CD4-positive, alpha-beta T cell (primary cell): ENCODE measurements at regions of chr19 and their contacts with region 1.

Region 1: GRCh38 chr19:36850559-36851442 is at the start of gene ZNF345:
- DNase-seq: peak; percentile 69 to 94 (median 79)
- ATAC-seq: peak; percentile 81
- H3K4me3 ChIP-seq: peak within 1 kb of the TSS; percentile 83
- H3K4me3 Mint-ChIP-seq: no peak within 1 kb of the TSS
- H3K27ac ChIP-seq: peak within 1 kb of the TSS; percentile 71 to 86
- H3K27ac Mint-ChIP-seq: no peak within 1 kb of the TSS
- H3K4me1 ChIP-seq: peaks cover 29% of the 10 kb centered on the region
- H3K4me1 Mint-ChIP-seq: peaks cover 15% of the 10 kb centered on the region
- H3K27me3 ChIP-seq: no peaks in the 10 kb centered on the region
- H3K27me3 Mint-ChIP-seq: no peaks in the 10 kb centered on the region
- CTCF ChIP-seq: no peak
- total RNA-seq, gene ZNF345: 5.9 to 7.1 TPM

Region 2: DNA sequence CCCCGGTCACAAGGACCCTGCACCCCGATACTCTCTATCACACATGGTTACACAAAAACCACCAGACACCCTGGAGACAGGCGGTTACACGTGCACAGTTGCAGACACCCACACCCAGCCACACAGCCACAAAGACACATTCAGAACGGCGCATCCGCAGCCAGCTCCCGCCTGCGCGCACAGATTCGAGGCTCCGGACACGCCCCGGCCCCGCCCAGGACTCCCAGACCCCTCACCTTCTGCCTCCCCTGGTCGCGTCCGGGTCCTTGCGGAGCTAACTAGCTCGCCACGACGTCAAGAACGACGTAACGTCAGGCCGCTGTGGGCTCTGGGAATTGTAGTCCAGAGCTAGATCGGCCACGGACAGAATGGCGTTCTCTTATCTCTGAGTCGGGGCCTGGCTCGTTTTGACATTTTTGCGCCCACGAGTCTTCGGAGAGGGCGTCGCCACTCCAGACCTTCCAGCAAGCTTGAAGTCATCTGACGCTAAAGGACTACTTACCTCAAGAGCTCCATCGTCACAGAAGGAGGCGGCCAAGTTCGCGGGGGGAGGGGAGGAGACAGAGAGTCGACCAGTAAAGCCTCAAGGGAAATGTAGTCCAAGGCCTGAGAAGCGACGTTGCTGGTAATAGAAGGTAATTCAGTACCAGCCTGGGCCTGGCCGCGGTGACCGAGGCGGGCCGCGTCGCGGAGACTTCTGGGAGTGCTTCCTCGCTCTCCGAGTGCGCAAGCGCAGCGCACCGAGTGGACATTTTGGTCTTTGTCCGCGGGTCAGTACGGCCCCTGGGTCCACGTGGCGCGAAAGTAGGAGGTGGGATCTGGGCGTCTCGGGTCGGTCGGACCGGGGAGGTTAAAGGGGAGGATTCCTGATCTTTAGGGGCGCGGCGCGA is 636.2 kb before region 1 on chr19 and contains the starts of genes ZNF146 and ZNF565:
- CTCF ChIA-PET with region 1: no interaction called
- POLR2A ChIA-PET with region 1: interaction called, 19 read pairs
- intact Hi-C with region 1: loop called in 1 of 2 experiments (anchors 1 kb)
- DNase-seq: peak; percentile 90 to 99 (median 94)
- ATAC-seq: peak; percentile 84
- H3K4me3 ChIP-seq: peak within 1 kb of the TSS; percentile 86
- H3K4me3 Mint-ChIP-seq: no peak within 1 kb of the TSS
- H3K27ac ChIP-seq: peak within 1 kb of the TSS; percentile 93 to 99
- H3K27ac Mint-ChIP-seq: no peak within 1 kb of the TSS
- H3K4me1 ChIP-seq: peaks cover 28% of the 10 kb centered on the region
- H3K4me1 Mint-ChIP-seq: peaks cover 17% of the 10 kb centered on the region
- H3K27me3 ChIP-seq: no peaks in the 10 kb centered on the region
- H3K27me3 Mint-ChIP-seq: no peaks in the 10 kb centered on the region
- CTCF ChIP-seq: no peak
- total RNA-seq, gene ZNF146: 13.6 to 13.7 TPM
- total RNA-seq, gene ZNF565: 7.6 to 8.5 TPM

Region 3: DNA sequence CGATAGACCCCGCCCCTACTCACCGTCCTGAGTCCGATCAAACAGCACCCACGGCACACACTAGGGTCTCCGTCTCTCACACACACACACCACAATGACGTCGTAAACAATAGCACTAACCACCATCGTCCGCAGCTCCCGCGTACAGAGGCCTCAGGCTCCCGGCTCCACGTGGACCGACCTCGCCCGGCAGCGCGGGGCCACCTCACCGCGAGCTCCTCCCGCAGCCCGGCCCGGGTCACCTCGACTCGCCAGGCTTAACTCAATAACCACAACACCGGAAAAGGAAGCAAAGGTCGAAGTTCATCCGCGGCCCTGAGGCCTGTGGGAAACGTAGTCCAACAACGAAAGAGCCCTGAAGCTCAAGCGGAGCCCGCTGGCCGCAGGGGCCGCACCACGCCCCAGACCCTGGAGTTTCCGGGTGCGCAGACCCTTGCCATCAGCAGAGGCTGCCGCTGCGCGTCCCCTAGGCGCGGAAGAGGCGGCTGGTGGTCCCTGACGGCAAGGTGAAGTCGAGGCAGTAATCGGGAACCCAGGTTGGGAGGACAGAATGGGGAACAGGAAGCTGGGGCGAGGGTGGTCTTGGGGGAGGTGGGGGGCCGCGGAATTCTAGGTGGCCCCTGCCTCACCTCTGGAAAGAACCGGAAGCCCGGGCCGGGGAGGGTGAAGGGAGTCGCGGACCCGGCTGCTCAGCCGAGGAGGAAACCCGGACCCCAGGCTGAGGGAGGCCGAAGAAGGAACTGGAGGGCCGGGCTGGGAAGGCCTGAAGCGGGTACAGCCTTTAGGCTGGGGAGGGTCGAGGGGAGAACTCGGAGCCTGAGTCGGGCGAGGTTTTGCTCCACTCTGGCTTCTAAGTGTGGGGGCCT is 277.5 kb before region 1 on chr19 and contains the start of gene ZNF529:
- CTCF ChIA-PET with region 1: no interaction called
- POLR2A ChIA-PET with region 1: interaction called, 12 read pairs
- intact Hi-C with region 1: loop called in 1 of 2 experiments (anchors 5 kb)
- DNase-seq: peak; percentile 69 to 94 (median 78)
- ATAC-seq: peak; percentile 92
- H3K4me3 ChIP-seq: peak within 1 kb of the TSS; percentile 88
- H3K4me3 Mint-ChIP-seq: peak within 1 kb of the TSS; percentile 94
- H3K27ac ChIP-seq: peak within 1 kb of the TSS; percentile 89 to 97
- H3K27ac Mint-ChIP-seq: peak within 1 kb of the TSS; percentile 93
- H3K4me1 ChIP-seq: peaks cover 25% of the 10 kb centered on the region
- H3K4me1 Mint-ChIP-seq: peaks cover 39% of the 10 kb centered on the region
- H3K27me3 ChIP-seq: no peaks in the 10 kb centered on the region
- H3K27me3 Mint-ChIP-seq: no peaks in the 10 kb centered on the region
- CTCF ChIP-seq: no peak
- total RNA-seq, gene ZNF529: 39.6 to 42.7 TPM

Region 4: DNA sequence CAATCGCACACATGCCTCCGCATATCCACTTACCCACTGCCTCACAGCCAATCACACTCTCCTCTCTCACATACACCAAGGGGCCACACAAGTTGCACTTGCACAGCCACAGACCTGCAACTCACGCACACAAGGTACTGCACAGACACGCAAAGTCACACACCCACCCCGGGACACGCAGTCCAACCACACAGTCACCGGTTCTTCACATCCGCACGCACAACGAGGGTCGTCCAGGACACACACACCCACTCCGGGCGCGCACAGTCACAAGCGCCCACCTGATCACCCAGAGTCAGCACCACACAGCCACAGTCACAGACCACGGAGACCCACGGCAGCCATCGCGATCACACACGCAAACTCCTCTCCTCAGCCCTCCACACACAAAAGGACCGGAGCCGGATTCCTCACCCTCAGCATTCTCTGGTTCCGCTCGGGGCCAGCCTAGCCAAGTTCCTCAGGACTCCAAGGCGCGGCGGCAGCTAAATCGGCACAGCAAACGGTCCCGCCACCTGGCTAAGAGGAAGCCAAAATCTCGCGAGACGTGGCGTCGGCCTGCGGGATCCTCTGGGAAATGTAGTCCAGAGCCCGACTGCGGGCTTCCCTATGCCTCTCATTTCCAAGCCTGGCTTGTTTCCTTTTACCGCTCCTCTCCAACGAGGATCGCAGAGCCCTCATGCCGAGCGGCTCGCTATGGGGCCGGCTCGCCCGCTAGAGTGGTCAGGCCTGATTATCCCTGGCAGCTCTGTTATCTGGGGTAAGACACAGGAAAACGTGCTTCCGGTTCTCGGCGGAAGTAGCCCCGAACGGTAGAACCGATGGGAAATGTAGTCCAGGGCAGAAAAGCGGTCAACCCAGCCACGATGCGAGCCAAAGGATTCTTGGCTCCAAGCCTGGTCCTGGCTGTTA is 78.2 kb before region 1 on chr19 and contains the start of gene ZNF850:
- CTCF ChIA-PET with region 1: no interaction called
- POLR2A ChIA-PET with region 1: interaction called, 26 read pairs
- intact Hi-C with region 1: loop called (anchors 1 kb)
- DNase-seq: peak; percentile 87 to 96 (median 93)
- ATAC-seq: peak; percentile 94
- H3K4me3 ChIP-seq: peak within 1 kb of the TSS; percentile 91
- H3K4me3 Mint-ChIP-seq: peak within 1 kb of the TSS; percentile 95
- H3K27ac ChIP-seq: peak within 1 kb of the TSS; percentile 78 to 94
- H3K27ac Mint-ChIP-seq: peak within 1 kb of the TSS; percentile 84
- H3K4me1 ChIP-seq: peaks cover 20% of the 10 kb centered on the region
- H3K4me1 Mint-ChIP-seq: peaks cover 20% of the 10 kb centered on the region
- H3K27me3 ChIP-seq: no peaks in the 10 kb centered on the region
- H3K27me3 Mint-ChIP-seq: no peaks in the 10 kb centered on the region
- CTCF ChIP-seq: no peak
- total RNA-seq, gene ZNF850: 0.77 to 2.1 TPM

Region 5: DNA sequence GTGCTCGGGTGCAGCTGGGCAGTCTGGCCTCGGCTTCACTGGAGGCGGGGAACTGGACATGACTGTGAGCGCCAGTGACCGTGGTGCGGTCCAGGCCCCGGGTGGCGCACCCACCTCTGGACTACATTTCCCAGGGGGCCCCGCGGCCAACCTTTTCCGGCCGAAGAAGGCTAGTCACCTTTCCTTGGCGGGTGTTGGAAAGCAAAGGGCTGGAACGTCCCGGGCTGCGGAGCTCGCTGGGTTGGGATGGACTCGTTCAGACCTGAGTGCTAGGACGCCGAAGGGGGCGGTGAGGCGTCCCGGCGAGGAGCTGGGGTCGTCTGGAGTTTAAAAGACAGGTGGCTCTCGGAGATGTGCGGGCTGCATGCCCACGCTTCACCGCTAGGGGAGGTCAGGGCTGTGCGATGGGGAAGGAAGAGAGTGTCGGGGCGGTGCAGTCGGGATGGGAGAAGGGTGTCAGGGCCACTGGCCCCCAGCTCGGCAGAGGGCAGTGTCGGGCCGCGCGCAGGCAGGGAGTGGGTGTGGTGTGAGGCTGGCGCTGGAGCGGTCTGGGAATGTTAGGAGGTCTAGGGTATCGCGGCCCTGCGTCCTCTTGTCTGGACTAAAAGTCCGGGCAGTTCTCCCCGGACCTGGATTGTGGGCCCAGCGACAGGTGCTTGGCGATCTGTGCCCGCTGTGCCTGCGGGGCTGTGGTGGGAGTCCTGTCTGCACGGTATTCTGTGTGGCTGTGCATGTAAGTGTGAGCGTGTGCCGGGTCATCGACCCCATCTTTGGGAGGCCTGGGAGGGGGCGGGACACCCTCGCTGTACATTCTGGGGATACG is 122.4 kb after region 1 on chr19:
- CTCF ChIA-PET with region 1: interaction called, 8 read pairs
- POLR2A ChIA-PET with region 1: interaction called, 10 read pairs
- intact Hi-C with region 1: loop called in 1 of 2 experiments (anchors 5 kb)
- DNase-seq: peak; percentile 48 to 91 (median 72)
- ATAC-seq: peak; percentile 98
- H3K4me3 ChIP-seq: peak overlapping the region; percentile 83
- H3K4me3 Mint-ChIP-seq: peak overlapping the region; percentile 92
- H3K27ac ChIP-seq: peak overlapping the region; percentile 57 to 78
- H3K27ac Mint-ChIP-seq: peak overlapping the region; percentile 94
- H3K4me1 ChIP-seq: peaks cover 17% of the 10 kb centered on the region
- H3K4me1 Mint-ChIP-seq: peaks cover 16% of the 10 kb centered on the region
- H3K27me3 ChIP-seq: no peaks in the 10 kb centered on the region
- H3K27me3 Mint-ChIP-seq: no peaks in the 10 kb centered on the region
- CTCF ChIP-seq: peak; percentile 97

Region 6: DNA sequence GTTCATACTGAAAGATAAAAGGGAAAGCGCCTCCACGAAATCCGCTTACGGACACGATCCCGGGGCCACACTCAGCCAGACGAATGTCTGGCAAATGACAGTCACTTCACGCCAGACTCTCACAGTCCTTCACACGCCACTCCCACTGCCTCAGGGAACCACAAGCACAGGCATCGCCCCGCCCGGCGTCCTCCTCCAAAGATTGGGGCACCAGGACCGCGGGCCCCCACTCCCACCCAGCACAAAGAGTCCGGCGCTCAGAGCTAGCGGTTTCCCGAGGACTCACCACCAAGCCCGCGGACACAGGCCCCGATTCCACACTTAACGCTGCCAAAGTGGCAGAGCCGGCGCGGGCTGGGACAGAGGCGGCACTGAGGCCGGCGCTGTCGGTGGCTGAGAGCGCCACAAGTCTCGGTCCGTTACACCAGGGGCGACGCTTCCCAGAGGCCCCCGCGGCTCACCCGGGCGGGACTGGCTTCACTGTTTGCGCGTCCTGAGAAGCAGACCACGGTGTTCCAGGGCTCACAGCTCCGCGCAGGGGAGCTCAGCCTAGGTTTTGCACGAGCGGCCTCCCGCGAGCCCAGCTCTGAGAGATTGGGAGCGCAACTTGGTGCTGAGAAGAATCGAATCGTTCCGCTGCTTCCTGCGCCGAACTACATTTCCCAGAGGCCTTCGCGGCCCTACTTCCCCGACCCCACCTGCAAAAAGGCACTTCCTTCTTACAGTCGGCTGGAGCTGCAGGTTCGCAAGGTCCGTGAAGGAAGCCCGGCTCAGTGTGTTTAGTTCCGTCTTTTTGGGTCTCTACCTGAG is 616.2 kb after region 1 on chr19 and contains the start of gene ZNF569:
- CTCF ChIA-PET with region 1: no interaction called
- POLR2A ChIA-PET with region 1: interaction called, 6 read pairs
- intact Hi-C with region 1: loop called in 1 of 2 experiments (anchors 2 kb)
- DNase-seq: peak; percentile 81 to 96 (median 86)
- ATAC-seq: peak; percentile 63
- H3K4me3 ChIP-seq: peak within 1 kb of the TSS; percentile 82
- H3K4me3 Mint-ChIP-seq: peak within 1 kb of the TSS; percentile 93
- H3K27ac ChIP-seq: peak within 1 kb of the TSS; percentile 83 to 87
- H3K27ac Mint-ChIP-seq: peak within 1 kb of the TSS; percentile 100
- H3K4me1 ChIP-seq: peaks cover 32% of the 10 kb centered on the region
- H3K4me1 Mint-ChIP-seq: peaks cover 44% of the 10 kb centered on the region
- H3K27me3 ChIP-seq: no peaks in the 10 kb centered on the region
- H3K27me3 Mint-ChIP-seq: no peaks in the 10 kb centered on the region
- CTCF ChIP-seq: no peak
- total RNA-seq, gene ZNF569: 5.0 to 5.2 TPM